ENCODE measurements at regions of chr11 and their contacts with region 1.

Region 1: GRCh38 chr11:120172054-120172911 is 34.4 kb upstream of the TRIM29 start:
- DNase-seq: peak; percentile 83
- ATAC-seq: peak; percentile 63

Region 2: DNA sequence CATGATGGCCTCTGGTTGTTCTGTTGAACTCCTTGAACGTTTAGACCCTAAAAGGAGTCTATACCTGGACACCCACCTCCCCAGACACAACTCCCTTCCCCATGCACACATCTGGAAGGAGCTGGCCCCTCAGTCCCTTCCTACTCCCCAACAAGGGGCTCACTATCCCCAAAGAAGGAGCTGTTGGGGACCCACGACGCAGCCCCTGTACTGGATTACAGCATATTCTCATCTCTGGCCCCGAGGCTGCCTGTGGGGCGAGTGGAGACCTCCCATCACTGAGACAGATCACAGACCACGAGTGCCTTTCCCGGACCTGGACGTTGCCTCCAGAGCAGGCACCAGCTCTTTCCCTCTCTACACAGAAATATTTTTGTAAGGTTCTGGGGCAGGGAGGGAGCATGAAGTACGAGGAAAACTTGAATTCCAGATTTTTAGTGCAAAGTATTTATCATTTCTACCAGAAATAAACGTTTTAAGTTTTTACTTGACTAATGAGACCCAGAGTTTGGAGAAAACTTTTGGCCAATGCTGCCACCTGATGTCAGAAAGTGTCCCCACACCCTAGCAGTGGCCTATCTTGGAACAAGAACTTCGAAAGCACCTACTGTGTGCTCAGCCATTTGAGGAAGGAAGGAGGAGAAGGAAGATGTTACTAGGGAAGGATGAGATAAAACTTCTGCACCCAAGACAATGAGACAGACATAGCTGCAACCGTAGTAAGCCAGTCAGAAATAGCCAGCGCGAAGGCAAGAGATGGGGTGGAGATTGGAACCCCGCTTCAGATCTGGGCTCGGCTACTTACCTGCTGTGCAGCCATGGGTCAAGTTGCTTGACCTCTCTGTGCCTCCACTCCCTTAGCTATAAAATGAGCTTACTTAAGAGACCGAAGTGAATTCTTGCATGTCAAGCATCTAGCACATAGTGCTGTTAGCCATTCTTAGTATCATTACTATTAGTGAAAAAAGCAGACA is 57.5 kb after region 1 on chr11:
- intact Hi-C with region 1: loop called (anchors 1 kb)
- DNase-seq: no peak
- ATAC-seq: no peak

Region 3: GRCh38 chr11:120303004-120303637 is 130.8 kb after region 1 on chr11:
- intact Hi-C with region 1: loop called (anchors 1 kb)
- DNase-seq: no peak
- ATAC-seq: peak; percentile 76